Activated CD8-positive, alpha-beta memory T cell treated with anti-CD3 and anti-CD28 coated beads, Interleukin-2, amount 10 ng/mL, durations not matched to agents 7 days and 5 days (primary cell): ENCODE measurements at regions of chr17 and their contacts with region 1.

Region 1: GRCh38 chr17:29124117-29124924 is 55.9 kb downstream of the MYO18A start:
- DNase-seq: peak; percentile 66
- ATAC-seq: peak; percentile 91
- H3K4me3 Mint-ChIP-seq: no peak overlapping the region
- H3K27ac Mint-ChIP-seq: no peak overlapping the region
- H3K4me1 Mint-ChIP-seq: peaks cover 2% of the 10 kb centered on the region
- H3K27me3 Mint-ChIP-seq: no peaks in the 10 kb centered on the region

Region 2: DNA sequence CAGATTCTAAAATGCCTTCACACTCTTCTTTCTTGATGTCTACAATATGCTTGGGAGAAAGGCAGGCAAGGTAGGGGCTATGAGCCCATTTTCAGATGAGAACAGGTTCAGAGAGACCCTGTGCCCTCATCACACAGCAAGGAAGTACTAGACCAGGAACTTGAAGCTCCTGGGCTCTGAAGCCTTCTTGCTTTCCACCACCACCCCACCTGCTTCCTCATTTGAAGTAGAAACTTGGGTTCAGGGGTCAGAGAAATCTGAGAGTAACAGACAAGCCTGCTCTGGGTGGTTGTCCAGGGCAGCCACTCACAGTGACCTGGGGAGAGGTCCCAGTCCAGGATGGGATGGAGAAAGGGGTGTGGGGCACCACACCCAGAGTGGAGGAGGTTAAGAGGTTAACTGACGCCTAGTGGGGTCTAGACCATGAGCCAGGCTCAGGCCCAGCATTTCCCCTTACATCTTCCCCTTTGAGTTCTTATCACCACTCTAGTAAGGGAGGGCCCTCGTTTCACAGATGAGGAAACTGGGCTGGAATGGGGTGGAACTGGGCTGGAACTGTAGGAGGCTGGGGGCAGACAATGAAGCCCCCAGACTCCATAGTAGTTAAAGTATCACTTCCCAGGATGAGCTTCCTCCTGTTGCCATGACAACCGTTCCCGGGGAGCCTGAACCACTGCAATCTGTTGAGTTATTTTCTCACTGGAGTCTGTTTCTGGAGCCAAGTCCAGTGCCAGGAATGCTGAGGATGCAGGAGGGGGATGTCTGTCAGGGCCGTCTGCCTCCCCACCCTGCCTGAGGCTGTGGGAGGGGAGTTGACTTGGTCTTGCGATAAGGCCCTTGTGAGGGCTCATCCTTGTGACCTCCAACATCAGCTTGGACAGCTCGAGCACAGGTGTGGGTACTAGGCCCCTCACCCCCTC is 156.8 kb before region 1 on chr17:
- CTCF ChIA-PET with region 1: interaction called, 337 read pairs
- DNase-seq: no peak
- ATAC-seq: no peak
- H3K4me3 Mint-ChIP-seq: no peak overlapping the region
- H3K27ac Mint-ChIP-seq: no peak overlapping the region
- H3K4me1 Mint-ChIP-seq: no peaks in the 10 kb centered on the region
- H3K27me3 Mint-ChIP-seq: peaks cover 16% of the 10 kb centered on the region

Region 3: DNA sequence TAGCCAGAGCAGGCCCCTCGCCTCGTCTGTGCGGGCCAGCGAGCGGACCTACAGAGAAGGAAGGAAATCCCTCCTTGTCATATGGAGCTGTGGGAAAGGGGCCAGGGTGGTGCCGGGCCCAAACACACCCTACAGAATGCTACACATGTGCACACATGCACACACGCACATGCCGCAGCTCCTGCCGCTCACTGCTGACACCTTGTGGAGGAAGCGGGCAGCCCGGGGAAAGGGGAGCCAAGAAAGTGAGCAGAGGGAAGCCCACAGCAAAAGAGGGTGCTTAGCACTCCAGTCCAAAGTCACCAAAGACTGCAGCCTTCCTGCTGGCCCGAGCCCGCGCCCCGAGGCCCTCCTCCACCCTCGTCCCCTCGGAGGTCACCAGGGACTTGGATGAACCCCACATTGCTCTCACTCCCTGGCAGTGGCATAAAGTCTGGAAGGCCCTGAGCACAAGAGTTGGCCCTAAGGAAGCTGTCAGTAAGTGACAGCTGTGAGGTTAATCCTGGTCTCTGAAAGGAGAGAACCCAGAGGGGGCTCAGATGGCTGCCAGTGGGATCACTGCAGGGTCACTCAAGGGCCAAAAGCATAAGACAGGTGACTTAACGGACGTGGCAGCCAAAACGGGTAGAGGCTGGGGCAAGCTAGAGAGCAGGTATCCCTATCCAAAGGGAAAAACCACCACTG is 12.4 kb before region 1 on chr17:
- CTCF ChIA-PET with region 1: interaction called, 23 read pairs
- DNase-seq: peak; percentile 78
- ATAC-seq: peak; percentile 74
- H3K4me3 Mint-ChIP-seq: no peak overlapping the region
- H3K27ac Mint-ChIP-seq: no peak overlapping the region
- H3K4me1 Mint-ChIP-seq: peaks cover 9% of the 10 kb centered on the region
- H3K27me3 Mint-ChIP-seq: no peaks in the 10 kb centered on the region

Region 4: GRCh38 chr17:29180034-29180787 is 55.9 kb after region 1 on chr17 and contains the start of gene MYO18A:
- CTCF ChIA-PET with region 1: interaction called, 80 read pairs
- DNase-seq: peak; percentile 84
- ATAC-seq: peak; percentile 94
- H3K4me3 Mint-ChIP-seq: peak within 1 kb of the TSS; percentile 33
- H3K27ac Mint-ChIP-seq: no peak within 1 kb of the TSS
- H3K4me1 Mint-ChIP-seq: peaks cover 34% of the 10 kb centered on the region
- H3K27me3 Mint-ChIP-seq: peaks cover 6% of the 10 kb centered on the region
- total RNA-seq, gene MYO18A: 67.7 to 85.8 TPM

Region 5: DNA sequence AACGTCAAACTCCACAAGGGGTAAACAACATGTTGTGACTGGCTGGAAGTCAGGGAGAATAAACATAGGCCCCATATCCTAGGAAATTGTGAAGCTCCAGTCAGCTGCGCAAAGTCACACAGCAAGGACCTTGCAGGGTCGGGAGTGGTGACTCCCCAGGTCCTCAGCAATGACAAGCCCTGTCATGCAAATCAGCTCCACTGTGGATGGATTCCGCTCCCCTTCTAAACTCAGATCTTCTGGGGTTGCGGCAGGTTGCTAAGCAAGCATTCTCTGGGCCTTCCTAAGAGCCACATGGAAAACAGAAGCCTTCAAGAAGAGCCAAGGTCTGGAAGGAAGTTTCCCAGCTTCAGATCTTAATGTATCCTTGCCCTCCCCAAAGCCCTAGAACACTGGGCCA is 84.8 kb after region 1 on chr17:
- CTCF ChIA-PET with region 1: interaction called, 11 read pairs
- DNase-seq: no peak
- ATAC-seq: no peak
- H3K4me3 Mint-ChIP-seq: no peak overlapping the region
- H3K27ac Mint-ChIP-seq: no peak overlapping the region
- H3K4me1 Mint-ChIP-seq: no peaks in the 10 kb centered on the region
- H3K27me3 Mint-ChIP-seq: peaks cover 11% of the 10 kb centered on the region

Region 6: GRCh38 chr17:29219378-29220047 is 95.2 kb after region 1 on chr17:
- CTCF ChIA-PET with region 1: interaction called, 40 read pairs
- DNase-seq: peak; percentile 80
- ATAC-seq: peak; percentile 92
- H3K4me3 Mint-ChIP-seq: no peak overlapping the region
- H3K27ac Mint-ChIP-seq: no peak overlapping the region
- H3K4me1 Mint-ChIP-seq: peaks cover 9% of the 10 kb centered on the region
- H3K27me3 Mint-ChIP-seq: peaks cover 3% of the 10 kb centered on the region

Region 7: DNA sequence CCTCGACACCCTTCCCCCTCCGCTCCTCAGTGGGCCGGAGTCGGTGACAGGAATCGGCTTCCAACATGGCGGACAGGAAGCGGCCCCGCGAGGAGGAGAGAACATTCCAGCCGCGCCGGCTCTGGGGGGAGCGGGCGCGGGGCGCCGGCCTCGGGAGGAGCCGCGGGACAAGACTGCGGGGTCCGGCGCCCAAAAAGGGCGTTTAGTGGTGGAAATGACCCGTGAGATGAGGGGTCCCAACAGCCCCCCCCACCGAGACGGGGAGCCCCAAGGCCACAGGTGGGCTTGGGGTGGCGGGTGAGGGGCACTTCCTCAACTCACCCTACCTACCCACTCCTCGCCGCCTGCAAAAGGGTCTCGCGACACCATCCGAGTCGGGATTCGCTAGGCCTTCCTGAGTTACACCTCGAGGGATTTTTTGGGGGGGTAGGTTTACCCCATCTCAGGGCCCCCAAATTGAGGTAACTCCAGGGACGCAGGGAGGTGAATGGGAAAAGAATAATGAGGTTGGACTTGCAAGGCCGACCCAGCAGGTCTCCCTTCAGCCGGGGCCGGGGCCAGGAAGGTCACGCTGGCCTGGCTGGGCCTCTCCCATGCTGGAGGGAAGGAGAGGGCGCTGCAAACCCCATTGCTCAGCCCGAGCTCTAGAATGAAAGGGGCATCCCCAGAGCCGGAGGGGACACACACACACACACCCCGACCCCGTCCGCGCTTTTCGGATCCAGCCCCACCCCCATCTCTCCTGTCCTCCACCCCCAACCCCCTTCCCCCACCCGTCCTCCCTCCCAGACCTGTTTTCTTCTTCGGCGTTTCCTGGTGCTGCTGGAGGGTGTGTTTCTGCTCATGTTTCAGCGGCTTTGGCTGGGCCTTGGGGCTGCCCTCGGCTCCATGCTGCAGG is 168.9 kb after region 1 on chr17:
- CTCF ChIA-PET with region 1: interaction called, 19 read pairs
- DNase-seq: peak; percentile 79
- ATAC-seq: peak; percentile 32
- H3K4me3 Mint-ChIP-seq: peak overlapping the region; percentile 98
- H3K27ac Mint-ChIP-seq: peak overlapping the region; percentile 98
- H3K4me1 Mint-ChIP-seq: peaks cover 41% of the 10 kb centered on the region
- H3K27me3 Mint-ChIP-seq: no peaks in the 10 kb centered on the region